MCF 10A (cell line): ENCODE measurements at regions of chr5 and their contacts with region 1.

Region 1: GRCh38 chr5:37668524-37669047 is 171.3 kb downstream of the GDNF start:
- DNase-seq: peak; percentile 94
- H3K4me3 Mint-ChIP-seq: no peak overlapping the region
- H3K27ac Mint-ChIP-seq: peak overlapping the region; percentile 78
- H3K4me1 Mint-ChIP-seq: peaks cover 13% of the 10 kb centered on the region
- H3K27me3 Mint-ChIP-seq: no peaks in the 10 kb centered on the region
- CTCF ChIP-seq: no peak

Region 2: DNA sequence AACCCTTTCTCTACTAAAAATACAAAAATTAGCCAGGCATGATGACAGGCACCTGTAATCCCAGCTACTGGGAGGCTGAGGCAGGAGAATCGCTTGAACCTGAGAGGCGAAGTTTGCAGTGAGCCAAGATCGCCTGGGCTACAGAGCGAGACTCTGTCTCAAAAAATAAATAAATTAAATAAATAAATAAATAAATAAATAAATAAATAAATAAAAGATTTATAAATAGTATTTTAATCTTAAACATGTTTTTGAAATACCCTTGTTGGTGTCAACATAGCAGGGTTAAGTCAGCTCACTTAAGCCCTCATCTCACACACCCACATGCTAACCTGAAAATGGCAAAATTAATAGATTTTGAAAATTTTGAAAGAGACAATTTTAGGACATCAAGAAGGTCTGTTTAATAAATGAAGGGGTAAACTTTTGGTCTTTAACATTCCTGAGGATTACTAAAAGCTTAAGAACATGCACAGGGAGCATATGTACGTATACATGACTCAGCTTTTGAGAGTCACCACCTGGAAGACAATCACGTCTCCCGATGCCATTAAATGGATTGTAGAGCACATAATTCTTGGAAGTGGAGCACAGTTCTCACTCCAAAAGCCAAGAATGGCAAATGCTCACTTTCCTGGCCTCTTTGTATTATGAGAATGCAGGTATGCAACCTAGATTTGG is 31.3 kb before region 1 on chr5:
- CTCF ChIA-PET with region 1: no interaction called
- POLR2A ChIA-PET with region 1: no interaction called
- intact Hi-C with region 1: no loop called
- DNase-seq: peak; percentile 47
- H3K4me3 Mint-ChIP-seq: no peak overlapping the region
- H3K27ac Mint-ChIP-seq: no peak overlapping the region
- H3K4me1 Mint-ChIP-seq: peaks cover 11% of the 10 kb centered on the region
- H3K27me3 Mint-ChIP-seq: no peaks in the 10 kb centered on the region
- CTCF ChIP-seq: no peak

Region 3: GRCh38 chr5:37751227-37751626 is 82.6 kb after region 1 on chr5:
- CTCF ChIA-PET with region 1: no interaction called
- POLR2A ChIA-PET with region 1: no interaction called
- intact Hi-C with region 1: no loop called
- DNase-seq: no peak
- H3K4me3 Mint-ChIP-seq: no peak overlapping the region
- H3K27ac Mint-ChIP-seq: no peak overlapping the region
- H3K4me1 Mint-ChIP-seq: peaks cover 11% of the 10 kb centered on the region
- H3K27me3 Mint-ChIP-seq: no peaks in the 10 kb centered on the region
- CTCF ChIP-seq: no peak

Region 4: GRCh38 chr5:38645508-38645907 is 976.9 kb after region 1 on chr5:
- CTCF ChIA-PET with region 1: no interaction called
- POLR2A ChIA-PET with region 1: no interaction called
- intact Hi-C with region 1: loop called (anchors 5 kb)
- DNase-seq: peak; percentile 4
- H3K4me3 Mint-ChIP-seq: no peak overlapping the region
- H3K27ac Mint-ChIP-seq: no peak overlapping the region
- H3K4me1 Mint-ChIP-seq: peaks cover 5% of the 10 kb centered on the region
- H3K27me3 Mint-ChIP-seq: peaks cover under 1% of the 10 kb centered on the region
- CTCF ChIP-seq: no peak